ENCODE measurements at regions of chr15 and their contacts with region 1.

Region 1: DNA sequence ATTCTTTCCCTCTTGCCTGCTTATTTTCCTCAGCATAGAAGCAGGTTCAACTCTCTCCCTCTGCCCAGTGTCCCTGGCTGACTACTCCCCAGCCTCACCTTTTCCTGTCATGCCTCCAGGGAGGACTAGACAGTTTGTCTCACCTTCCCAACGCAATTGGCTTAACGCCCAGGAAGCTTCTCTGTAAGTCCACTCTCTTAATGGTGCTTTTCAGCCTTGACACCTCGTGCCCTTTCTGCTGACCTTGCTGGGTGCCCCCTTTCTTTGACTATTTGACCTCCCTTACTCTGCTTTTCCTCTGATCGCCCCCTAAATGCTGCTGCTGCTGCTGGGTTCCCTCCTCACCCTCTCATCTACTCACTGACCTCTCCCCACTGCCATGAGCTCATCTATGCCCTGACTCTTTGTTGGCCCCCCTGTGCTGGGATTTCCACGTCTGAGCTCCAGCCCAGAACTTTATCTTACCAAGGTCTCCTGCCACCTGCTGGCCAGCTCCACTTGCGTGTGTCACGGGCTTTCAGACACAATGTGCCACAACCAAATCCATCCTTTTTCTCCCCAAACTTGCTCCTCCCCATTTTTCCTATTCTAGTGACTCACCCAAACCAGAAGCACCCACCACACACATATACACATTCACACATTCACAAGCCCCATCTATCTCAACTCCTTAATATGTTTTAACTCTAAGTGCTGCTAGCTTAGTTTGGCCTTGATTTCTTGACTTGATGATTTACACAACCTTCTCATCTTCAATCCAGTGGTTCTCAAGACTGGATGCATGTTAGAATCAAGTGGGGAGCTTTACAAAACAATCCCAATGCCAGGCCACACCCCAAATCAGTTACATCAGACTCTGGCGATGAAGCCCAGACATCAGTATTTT is 16.6 kb downstream of the EPB42 start:
- DNase-seq: peak in 1 of 2 donors; percentile 34
- ATAC-seq: peak in 1 of 2 donors; percentile 74
- H3K4me3 ChIP-seq: no peak overlapping the region
- H3K27ac ChIP-seq: no peak overlapping the region
- H3K4me1 ChIP-seq: peaks cover 0 to 5% of the 10 kb centered on the region in 2 donors
- H3K27me3 ChIP-seq: no peaks in the 10 kb centered on the region
- CTCF ChIP-seq: peak; percentile 26 to 66 (median 63)
- POLR2A ChIP-seq: no peak

Region 2: GRCh38 chr15:42704492-42704926 is 499.8 kb before region 1 on chr15:
- in situ Hi-C with region 1: no loop called
- intact Hi-C with region 1: loop called (anchors 10 kb)
- DNase-seq: peak; percentile 25 to 55
- ATAC-seq: peak; percentile 89 to 98
- H3K4me3 ChIP-seq: no peak overlapping the region
- H3K27ac ChIP-seq: no peak overlapping the region
- H3K4me1 ChIP-seq: no peaks in the 10 kb centered on the region
- H3K27me3 ChIP-seq: no peaks in the 10 kb centered on the region
- CTCF ChIP-seq: peak; percentile 50 to 87 (median 73)
- POLR2A ChIP-seq: no peak

Region 3: DNA sequence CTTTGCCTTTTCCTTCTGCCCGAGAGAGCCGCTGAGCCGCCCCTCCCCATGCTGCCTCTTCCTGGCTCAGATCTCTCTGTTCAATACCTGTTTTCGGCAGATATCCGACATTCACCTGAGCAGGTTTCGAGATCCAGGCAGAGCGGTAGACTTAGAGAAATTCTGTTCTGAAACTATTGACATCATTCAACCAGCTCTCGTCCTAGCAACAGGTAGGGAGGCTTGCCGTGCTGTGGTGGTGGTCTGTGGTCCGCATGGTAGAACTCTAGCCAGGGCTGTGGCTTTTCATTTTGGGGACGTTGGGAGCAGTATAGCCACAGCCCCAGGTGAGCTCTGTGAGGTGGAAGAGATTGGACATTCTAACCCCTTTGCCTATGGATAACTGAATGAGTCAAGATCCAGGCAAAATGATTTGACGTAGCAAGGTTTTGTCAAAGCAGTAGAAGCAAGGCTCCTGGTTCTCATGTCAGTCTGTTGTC is 70.1 kb before region 1 on chr15:
- in situ Hi-C with region 1: no loop called
- intact Hi-C with region 1: no loop called
- DNase-seq: no peak
- ATAC-seq: no peak
- H3K4me3 ChIP-seq: peak overlapping the region; percentile 70 to 89 (median 74)
- H3K27ac ChIP-seq: peak overlapping the region; percentile 70 to 84 (median 79)
- H3K4me1 ChIP-seq: peaks cover 13 to 14% of the 10 kb centered on the region in 2 donors
- H3K27me3 ChIP-seq: no peaks in the 10 kb centered on the region
- CTCF ChIP-seq: no peak
- POLR2A ChIP-seq: no peak

Region 4: DNA sequence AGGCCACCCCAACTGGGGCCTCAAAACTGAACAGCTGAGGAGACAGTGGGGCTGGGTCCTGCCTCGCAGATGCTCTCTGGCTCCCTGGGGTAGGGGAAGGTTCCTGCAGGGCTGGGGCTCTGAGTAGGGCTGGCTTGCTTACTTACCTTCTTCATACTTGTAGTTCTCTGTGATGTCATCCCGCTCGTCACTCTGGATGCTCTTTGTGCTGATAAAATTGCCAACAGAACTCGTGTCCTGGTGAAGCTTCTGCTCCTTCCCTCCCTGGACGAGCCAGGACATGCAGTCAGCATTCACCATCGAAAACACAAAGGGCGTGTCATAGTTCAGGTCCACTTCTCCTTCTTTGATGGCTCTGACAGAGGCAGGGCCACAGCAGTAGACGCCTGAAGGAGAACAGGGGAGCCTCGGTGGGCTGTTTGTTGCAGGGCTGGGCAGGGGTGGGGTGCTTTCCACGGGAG is 34.4 kb after region 1 on chr15:
- in situ Hi-C with region 1: no loop called
- intact Hi-C with region 1: no loop called
- DNase-seq: peak in 1 of 2 donors; percentile 29
- ATAC-seq: peak; percentile 24 to 51
- H3K4me3 ChIP-seq: no peak overlapping the region
- H3K27ac ChIP-seq: peak overlapping the region; percentile 66 to 78 (median 72)
- H3K4me1 ChIP-seq: peaks cover 18 to 36% of the 10 kb centered on the region in 2 donors
- H3K27me3 ChIP-seq: no peaks in the 10 kb centered on the region
- CTCF ChIP-seq: no peak
- POLR2A ChIP-seq: no peak

Region 5: GRCh38 chr15:43249699-43250203 is 45.5 kb after region 1 on chr15:
- in situ Hi-C with region 1: no loop called
- intact Hi-C with region 1: no loop called
- DNase-seq: no peak
- ATAC-seq: no peak
- H3K4me3 ChIP-seq: no peak overlapping the region
- H3K27ac ChIP-seq: no peak overlapping the region
- H3K4me1 ChIP-seq: no peaks in the 10 kb centered on the region
- H3K27me3 ChIP-seq: no peaks in the 10 kb centered on the region
- CTCF ChIP-seq: no peak
- POLR2A ChIP-seq: no peak

Region 6: DNA sequence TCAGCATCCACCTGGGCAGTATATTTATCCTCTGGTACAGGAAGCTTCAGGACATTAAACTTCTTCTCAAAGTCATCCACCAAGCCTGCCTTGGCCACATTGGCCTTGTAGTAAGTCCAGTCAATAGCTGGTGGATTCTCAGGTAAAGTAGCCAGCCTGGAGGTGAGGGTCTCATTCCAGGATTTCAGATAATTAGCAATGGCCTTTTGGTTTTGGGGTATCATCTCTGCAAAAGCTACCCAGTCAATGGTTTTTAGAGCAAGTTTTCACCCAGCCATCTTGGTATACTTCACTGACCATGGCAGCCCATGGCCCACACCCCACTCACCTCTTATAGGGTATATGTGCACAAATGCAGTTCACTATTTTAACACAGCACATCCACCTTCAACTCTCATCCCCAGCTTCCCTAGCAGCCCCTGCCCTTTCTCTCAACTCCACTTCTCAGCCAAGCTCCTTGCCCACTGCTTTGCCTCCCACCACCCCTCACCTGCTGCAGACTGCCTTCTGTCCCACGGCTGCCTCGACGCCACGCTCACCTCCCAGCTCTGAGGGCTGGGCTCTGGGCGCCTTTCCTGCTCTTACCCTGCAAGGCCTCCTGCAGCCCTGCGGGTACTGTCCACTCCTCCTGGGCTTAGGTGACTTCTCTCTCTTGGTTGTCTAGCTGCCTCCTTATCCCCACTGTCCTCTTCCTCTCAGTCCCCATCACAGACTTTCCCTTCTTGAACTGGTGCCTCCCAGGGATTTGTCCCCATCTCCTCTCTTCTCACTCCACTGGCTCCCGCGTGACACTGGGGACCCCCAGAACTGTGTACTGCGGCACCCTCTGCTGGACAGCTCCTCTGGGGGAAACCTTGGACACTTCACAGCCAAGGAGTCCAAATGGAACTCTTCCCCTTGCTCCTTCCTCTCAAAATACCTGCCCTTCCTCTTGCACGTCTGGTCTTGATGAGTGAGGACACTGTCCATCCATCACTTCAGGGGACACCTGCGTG is 64.1 kb after region 1 on chr15:
- in situ Hi-C with region 1: no loop called
- intact Hi-C with region 1: no loop called
- DNase-seq: no peak
- ATAC-seq: no peak
- H3K4me3 ChIP-seq: no peak overlapping the region
- H3K27ac ChIP-seq: no peak overlapping the region
- H3K4me1 ChIP-seq: peaks cover 3 to 4% of the 10 kb centered on the region in 2 donors
- H3K27me3 ChIP-seq: no peaks in the 10 kb centered on the region
- CTCF ChIP-seq: no peak
- POLR2A ChIP-seq: no peak